A673 (cell line): ENCODE measurements at regions of chr20 and their contacts with region 1.

Region 1: DNA sequence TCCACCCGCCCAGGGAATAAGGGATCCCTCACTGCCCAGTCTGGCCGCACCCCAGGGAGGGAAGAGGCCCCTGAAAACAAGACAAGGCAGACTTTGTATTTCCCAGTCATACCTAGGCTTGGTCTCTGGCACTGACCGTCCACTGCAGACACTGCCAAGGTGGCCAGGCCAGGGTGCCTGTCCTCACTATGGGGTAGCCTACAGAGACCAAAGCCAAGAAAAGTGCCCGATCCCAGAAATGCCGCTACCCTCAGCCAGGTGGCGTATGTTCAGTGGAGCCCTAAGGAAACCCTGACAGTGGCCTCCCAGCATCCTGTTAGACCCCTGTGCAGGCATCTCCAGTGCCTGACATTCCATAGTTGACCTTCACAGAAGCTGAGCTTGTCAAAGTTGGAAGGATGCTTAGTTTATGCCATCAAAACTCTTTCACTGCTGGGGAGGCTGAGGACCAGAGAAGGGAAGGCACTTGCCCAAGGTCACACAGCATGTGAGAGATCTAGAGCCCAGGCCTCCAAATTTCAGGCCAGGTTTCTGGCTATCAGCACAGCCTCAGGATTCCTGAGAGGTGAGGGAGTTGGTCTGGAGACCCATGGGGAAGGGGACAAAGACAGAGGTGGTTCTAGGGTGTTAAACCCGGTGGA is 2.5 kb downstream of the SCRT2 start:
- DNase-seq: no peak
- H3K4me3 ChIP-seq: no peak overlapping the region
- H3K27ac ChIP-seq: no peak overlapping the region
- H3K4me1 ChIP-seq: peaks cover 12% of the 10 kb centered on the region
- H3K27me3 ChIP-seq: peaks cover 49% of the 10 kb centered on the region
- CTCF ChIP-seq: peak; percentile 44; the same call in 1 of the 2 replicates

Region 2: DNA sequence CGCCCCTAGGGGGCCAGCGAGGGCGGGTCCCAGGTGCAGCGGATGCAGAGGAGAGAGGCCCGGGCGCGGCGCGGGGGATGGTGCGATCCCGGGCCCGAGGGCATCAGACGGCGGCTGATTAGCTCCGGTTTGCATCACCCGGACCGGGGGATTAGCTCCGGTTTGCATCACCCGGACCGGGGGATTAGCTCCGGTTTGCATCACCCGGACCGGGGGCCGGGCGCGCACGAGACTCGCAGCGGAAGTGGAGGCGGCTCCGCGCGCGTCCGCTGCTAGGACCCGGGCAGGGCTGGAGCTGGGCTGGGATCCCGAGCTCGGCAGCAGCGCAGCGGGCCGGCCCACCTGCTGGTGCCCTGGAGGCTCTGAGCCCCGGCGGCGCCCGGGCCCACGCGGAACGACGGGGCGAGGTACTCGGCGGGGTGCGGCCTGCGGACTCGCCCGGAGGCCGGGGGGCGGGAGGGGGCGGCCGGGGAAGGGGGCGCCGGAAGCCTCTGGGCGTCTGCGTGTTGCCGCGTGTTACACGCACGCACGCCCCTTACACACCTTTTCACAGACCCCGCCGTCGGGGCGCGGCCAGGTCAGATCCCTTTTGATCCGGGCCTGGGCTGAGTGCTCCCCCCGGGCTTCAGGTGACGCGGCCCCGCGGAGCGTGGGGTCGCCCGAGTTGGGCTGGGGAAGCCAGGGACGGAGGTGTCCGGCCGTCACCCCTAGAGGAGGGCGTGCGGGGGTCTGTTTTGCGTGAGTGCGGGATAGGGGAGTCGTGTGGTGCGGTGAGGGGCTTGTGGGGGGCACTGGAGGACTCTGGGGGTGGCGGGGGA is 292.1 kb before region 1 on chr20:
- CTCF ChIA-PET with region 1: no interaction called
- POLR2A ChIA-PET with region 1: interaction called, 10 read pairs
- intact Hi-C with region 1: no loop called
- DNase-seq: peak; percentile 66
- H3K4me3 ChIP-seq: peak overlapping the region; percentile 84
- H3K27ac ChIP-seq: peak overlapping the region; percentile 97
- H3K4me1 ChIP-seq: peaks cover 35% of the 10 kb centered on the region
- H3K27me3 ChIP-seq: no peaks in the 10 kb centered on the region
- CTCF ChIP-seq: no peak